GM23248 (cell line): ENCODE measurements at regions of chr19 and their contacts with region 1.

Region 1: DNA sequence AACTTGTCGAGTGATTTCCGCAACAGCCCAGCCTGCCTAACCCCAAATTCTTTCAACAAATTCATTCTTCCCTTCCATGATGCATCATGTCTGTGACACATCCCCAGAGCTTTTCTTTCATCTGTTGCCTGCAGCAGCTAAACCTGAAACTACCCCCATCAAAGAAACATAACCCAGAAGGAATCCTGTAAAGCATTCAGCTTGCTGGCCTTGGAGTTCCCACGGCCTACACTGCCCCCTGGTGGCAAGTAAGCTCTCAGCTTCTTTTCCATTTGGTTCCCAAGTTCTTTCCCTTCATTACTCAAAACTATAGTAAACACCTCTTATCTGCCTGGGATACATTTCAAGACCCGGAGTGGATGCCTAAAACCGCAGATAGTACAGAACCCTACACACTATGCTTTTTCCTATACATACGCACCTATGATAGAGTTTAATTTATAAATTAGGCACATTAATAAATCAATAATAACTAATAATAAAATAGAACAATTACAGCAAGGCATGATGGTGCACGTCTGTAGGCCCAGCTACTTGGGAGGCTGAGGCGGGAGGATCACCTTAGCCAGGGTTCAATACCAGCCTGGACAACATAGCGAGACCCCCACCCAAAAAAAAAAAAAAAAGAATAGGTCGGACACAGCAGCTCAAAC is 7.4 kb downstream of the ETHE1 start:
- DNase-seq: peak; percentile 94
- H3K4me3 ChIP-seq: no peak overlapping the region
- H3K27ac ChIP-seq: peak overlapping the region; percentile 54
- H3K4me1 ChIP-seq: peaks cover 26% of the 10 kb centered on the region
- H3K27me3 ChIP-seq: no peaks in the 10 kb centered on the region

Region 2: GRCh38 chr19:43395561-43395960 is 124.0 kb before region 1 on chr19:
- in situ Hi-C with region 1: no loop called
- DNase-seq: no peak
- H3K4me3 ChIP-seq: no peak overlapping the region
- H3K27ac ChIP-seq: no peak overlapping the region
- H3K4me1 ChIP-seq: no peaks in the 10 kb centered on the region
- H3K27me3 ChIP-seq: peaks cover 49% of the 10 kb centered on the region

Region 3: GRCh38 chr19:43446746-43447489 is 72.6 kb before region 1 on chr19:
- in situ Hi-C with region 1: loop called (anchors 5 kb)
- DNase-seq: peak; percentile 79
- H3K4me3 ChIP-seq: no peak overlapping the region
- H3K27ac ChIP-seq: no peak overlapping the region
- H3K4me1 ChIP-seq: peaks cover 5% of the 10 kb centered on the region; the same call in 1 of the 2 replicates
- H3K27me3 ChIP-seq: no peaks in the 10 kb centered on the region